ENCODE measurements at regions of chr4 and their contacts with region 1.

Region 1: GRCh38 chr4:55395529-55396307 is at the start of gene TMEM165:
- DNase-seq: no peak
- ATAC-seq: peak; percentile 99
- H3K4me3 ChIP-seq: peak within 1 kb of the TSS; percentile 79 to 93
- H3K27ac ChIP-seq: peak within 1 kb of the TSS; percentile 83
- H3K4me1 ChIP-seq: peaks cover 9% of the 10 kb centered on the region
- H3K27me3 ChIP-seq: no peaks in the 10 kb centered on the region
- CTCF ChIP-seq: no peak
- total RNA-seq, gene TMEM165: 54.6 TPM

Region 2: GRCh38 chr4:55345980-55346850 is 49.5 kb before region 1 on chr4 and contains the start of gene SRD5A3:
- CTCF ChIA-PET with region 1: no interaction called
- POLR2A ChIA-PET with region 1: no interaction called
- in situ Hi-C with region 1: no loop called
- intact Hi-C with region 1: loop called (anchors 5 kb)
- DNase-seq: peak; percentile 5
- ATAC-seq: peak; percentile 98
- H3K4me3 ChIP-seq: peak within 1 kb of the TSS; percentile 56 to 66
- H3K27ac ChIP-seq: peak within 1 kb of the TSS; percentile 87
- H3K4me1 ChIP-seq: peaks cover 7% of the 10 kb centered on the region; the same call in 1 of the 2 replicates
- H3K27me3 ChIP-seq: no peaks in the 10 kb centered on the region
- CTCF ChIP-seq: peak; percentile 91
- total RNA-seq, gene SRD5A3: 17.0 TPM

Region 3: DNA sequence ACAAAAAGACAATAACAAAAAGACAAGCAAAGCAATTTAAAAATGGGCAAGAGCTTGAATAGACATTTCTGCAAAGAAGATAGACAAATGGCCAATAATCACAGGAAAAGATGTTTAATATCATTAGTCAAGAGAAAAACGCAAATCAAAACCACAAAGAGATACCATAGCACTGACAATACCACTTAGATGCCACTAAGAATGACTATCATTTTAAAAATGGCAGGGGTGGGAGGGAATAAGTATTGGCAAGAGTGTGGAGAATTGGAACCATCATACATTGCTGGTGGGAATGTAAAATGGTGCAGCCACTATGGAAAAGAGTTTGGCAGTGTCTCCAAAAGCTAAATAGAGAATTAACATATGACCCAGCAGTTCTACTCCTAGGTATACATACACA is 442.6 kb after region 1 on chr4:
- CTCF ChIA-PET with region 1: no interaction called
- POLR2A ChIA-PET with region 1: no interaction called
- in situ Hi-C with region 1: no loop called
- intact Hi-C with region 1: no loop called
- DNase-seq: no peak
- ATAC-seq: no peak
- H3K4me3 ChIP-seq: no peak overlapping the region
- H3K27ac ChIP-seq: no peak overlapping the region
- H3K4me1 ChIP-seq: no peaks in the 10 kb centered on the region
- H3K27me3 ChIP-seq: no peaks in the 10 kb centered on the region
- CTCF ChIP-seq: no peak

Measured in Panc1 (cell line).